ENCODE measurements at regions of chr2 and their contacts with region 1.

Region 1: DNA sequence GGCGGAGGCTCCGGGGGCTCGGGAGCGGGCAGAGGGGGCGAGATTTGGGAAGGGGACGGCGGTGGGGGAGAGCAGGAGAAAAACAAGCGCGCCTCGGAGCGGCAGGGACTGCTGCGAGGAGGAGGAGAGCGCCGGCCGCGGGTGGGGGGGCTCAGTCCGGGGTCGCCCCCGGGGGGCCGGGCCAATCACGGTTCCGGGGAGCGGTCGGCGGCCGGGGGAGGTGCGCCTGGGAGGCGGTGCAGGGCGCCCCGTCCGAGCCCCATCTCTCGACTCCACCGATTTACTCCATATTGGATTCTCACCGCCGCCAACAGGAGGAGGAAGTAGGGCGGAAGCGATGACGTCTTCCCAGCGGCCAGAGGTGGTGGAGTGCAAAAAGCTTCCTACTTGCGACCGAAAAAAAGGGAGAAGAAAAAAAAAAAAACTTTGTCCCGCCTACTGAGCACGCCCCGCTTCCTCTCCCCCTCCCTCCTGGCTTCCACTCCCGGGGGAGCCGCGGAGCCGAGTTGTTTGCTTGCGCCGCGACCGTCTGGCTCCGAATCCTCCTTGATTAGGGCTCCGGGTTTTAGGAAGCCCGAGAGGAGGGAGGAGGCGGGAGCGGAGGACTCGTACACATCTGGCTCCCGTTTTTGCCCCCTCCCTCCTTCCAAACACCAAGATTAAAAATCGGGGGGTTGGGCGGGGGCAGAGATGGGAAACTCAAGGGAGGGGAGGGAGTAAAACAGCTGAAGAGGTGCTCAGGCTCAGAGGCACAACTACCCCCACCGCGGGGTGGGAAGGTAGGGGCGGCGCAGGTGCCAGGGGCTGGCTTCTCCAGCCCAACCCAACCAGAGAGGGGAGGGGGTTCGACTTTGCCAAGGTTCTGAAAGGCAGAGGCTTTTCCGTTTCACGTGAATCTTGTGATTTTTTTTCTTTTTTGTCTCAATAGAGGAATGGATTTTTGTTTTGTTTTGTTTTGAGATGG is at the start of gene SPRED2:
- DNase-seq: peak; percentile 96
- total RNA-seq, gene SPRED2: 22.0 TPM

Region 2: DNA sequence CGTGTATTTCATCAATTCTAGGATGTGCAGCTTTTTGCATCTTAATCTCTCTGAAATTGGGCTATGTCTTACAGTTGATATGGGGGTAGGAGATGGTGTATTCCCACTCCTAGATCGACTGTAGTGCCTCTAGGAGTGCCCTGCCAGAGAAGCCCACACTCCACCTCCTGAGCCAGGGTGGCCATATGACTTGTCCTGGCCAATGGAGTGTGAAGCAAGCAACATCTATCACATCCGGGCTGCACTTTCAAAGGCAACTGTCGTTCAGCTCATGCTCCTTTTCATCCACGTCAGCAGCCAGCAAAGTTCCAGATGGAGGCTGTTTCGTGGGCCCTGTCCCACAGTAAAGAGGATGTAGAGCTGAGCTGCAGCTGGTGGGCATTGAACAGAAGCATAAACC is 592.7 kb before region 1 on chr2:
- intact Hi-C with region 1: no loop called
- DNase-seq: no peak

Region 3: GRCh38 chr2:65227425-65228262 is 204.9 kb before region 1 on chr2 and contains the start of gene ACTR2:
- intact Hi-C with region 1: loop called (anchors 5 kb)
- DNase-seq: peak; percentile 99
- total RNA-seq, gene ACTR2: 110 TPM

Region 4: GRCh38 chr2:65267007-65267406 is 165.5 kb before region 1 on chr2:
- intact Hi-C with region 1: loop called (anchors 2 kb)
- DNase-seq: no peak

Region 5: GRCh38 chr2:65309708-65310107 is 122.8 kb before region 1 on chr2:
- intact Hi-C with region 1: loop called (anchors 5 kb)
- DNase-seq: no peak

Region 6: GRCh38 chr2:65350684-65351083 is 81.8 kb before region 1 on chr2:
- intact Hi-C with region 1: no loop called
- DNase-seq: no peak

Region 7: GRCh38 chr2:65382776-65383357 is 49.6 kb before region 1 on chr2:
- intact Hi-C with region 1: loop called (anchors 1 kb)
- DNase-seq: peak; percentile 85

Region 8: DNA sequence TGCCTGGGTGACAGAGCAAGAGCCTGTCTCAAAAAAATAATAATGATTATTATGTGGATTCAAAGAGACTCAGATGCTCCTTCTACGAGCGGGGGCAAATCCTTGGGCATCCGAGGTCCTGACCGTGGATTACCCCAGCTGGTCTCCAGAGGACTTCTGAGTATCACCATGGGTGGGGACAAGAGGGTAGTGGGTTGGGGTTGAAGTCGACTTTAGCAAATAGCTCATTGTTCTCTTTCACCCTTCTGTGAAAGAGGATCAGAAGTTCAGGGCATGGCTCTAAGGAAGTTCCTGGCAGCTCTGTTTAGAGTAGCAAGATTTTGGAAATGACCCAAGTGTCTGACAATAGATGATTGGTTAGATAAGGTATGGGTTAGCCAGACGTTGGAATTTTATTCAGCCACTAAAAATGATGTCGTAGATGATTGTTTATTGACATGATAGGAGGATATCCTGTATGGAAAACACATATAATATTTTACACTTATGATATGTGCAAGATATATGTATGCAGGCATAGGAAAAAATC is 58.9 kb after region 1 on chr2:
- intact Hi-C with region 1: no loop called
- DNase-seq: no peak

Region 9: GRCh38 chr2:65545837-65546805 is 113.6 kb after region 1 on chr2:
- intact Hi-C with region 1: loop called (anchors 5 kb)
- DNase-seq: no peak

Measured in cardiac septum (tissue), 1 donor.